ENCODE measurements at regions of chr1 and their contacts with region 1.

Region 1: DNA sequence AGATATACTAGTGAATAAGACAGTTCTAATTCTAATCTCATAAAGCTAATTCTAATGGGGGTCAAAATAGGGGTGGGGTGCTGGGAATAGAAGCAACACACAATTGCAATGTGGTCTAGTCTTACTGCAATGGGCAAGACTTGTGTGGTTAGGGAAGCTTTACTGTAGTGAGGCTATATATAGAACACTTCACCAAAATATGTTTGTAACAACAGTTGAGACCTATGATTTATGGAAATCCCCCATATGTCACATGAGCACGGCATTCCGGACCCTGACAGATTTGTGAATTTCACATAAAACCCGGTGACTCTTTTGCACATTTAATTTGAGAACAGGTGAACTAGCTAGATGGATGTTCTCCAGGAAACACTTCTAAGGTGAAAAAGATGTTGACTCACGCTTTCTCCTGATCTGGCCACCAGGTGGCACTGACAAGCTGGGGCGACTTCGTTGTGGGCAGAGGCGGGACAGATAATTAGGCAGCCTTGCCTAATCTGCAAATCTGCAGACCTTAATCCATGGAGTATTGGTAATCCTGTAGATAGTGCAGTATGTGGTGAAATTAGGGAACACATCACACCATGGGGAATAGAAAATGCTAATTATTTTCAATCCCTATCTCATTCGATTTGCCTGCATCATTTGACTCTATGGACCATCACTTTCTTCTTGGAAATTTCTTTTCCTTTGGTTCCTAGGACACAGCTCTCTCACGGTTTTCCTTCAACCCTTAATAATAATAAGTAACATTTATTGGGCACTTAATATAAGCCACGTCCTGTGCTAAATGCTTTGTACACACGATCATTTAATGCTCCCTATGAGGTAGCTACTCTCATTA is 37.7 kb downstream of the KIAA0040 start:
- DNase-seq: peak; percentile 61 to 72
- H3K4me3 ChIP-seq: no peak overlapping the region
- H3K27ac ChIP-seq: no peak overlapping the region
- H3K4me1 ChIP-seq: no peaks in the 10 kb centered on the region
- H3K27me3 ChIP-seq: no peaks in the 10 kb centered on the region
- CTCF ChIP-seq: peak; percentile 75 to 82 (median 78)
- POLR2A ChIP-seq: no peak

Region 2: GRCh38 chr1:174743654-174744561 is 410.9 kb before region 1 on chr1:
- intact Hi-C with region 1: no loop called
- DNase-seq: no peak
- H3K4me3 ChIP-seq: no peak overlapping the region
- H3K27ac ChIP-seq: no peak overlapping the region
- H3K4me1 ChIP-seq: no peaks in the 10 kb centered on the region
- H3K27me3 ChIP-seq: no peaks in the 10 kb centered on the region
- CTCF ChIP-seq: peak; percentile 33 to 60 (median 49)
- POLR2A ChIP-seq: no peak

Region 3: GRCh38 chr1:175217721-175218531 is 63.1 kb after region 1 on chr1:
- intact Hi-C with region 1: loop called (anchors 10 kb)
- DNase-seq: no peak
- H3K4me3 ChIP-seq: no peak overlapping the region
- H3K27ac ChIP-seq: no peak overlapping the region
- H3K4me1 ChIP-seq: no peaks in the 10 kb centered on the region
- H3K27me3 ChIP-seq: no peaks in the 10 kb centered on the region
- CTCF ChIP-seq: no peak
- POLR2A ChIP-seq: no peak

Region 4: DNA sequence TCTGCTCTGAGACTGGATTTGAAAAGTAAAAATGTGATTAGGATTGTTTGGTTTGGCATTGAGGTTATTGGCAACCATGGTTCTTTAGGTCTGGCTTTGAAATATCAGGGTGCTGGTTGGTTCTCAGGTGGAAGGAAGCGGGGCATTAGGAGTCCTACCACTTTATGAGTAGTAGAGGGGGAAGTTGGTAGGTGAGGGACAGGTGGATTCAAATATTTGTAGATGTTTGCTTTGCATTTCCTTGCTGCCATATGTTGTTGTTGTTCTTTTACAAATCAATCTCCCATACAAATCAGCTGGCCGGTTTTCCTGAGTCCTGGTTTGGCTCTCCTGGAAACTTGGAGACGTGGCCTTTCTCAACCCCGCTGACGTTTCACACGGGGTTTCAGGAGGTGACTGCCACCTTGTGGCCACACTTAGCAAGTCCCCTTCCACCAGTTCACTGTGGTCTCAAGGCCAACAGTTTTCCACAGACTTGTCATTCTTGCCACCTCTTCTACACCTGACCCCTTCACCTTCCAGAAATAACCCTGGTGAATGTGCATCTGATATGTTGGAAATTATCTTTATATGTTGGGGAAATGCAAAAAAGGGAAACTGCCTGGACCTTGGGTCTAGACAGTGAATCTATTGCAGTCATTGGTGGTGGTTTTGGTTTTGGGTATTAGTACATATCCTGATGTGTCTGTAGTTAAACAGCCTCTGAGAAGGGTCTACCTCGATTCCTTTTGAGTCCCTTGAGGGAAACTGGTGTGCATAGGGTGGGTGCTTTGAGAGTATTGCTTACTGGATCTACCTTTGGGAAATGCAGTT is 164.8 kb after region 1 on chr1:
- intact Hi-C with region 1: loop called (anchors 5 kb)
- DNase-seq: peak; percentile 74 to 81
- H3K4me3 ChIP-seq: no peak overlapping the region
- H3K27ac ChIP-seq: peak overlapping the region; percentile 27 to 33
- H3K4me1 ChIP-seq: no peaks in the 10 kb centered on the region
- H3K27me3 ChIP-seq: no peaks in the 10 kb centered on the region
- CTCF ChIP-seq: peak; percentile 73 to 89 (median 80)
- POLR2A ChIP-seq: no peak

Measured in uterus (tissue), 4 donors.